Colonic mucosa (tissue), 4 donors: ENCODE measurements at regions of chr20 and their contacts with region 1.

Region 1: GRCh38 chr20:2851086-2851485 is 10.5 kb downstream of the VPS16 start:
- DNase-seq: no peak
- H3K4me3 ChIP-seq: no peak overlapping the region
- H3K27ac ChIP-seq: no peak overlapping the region
- H3K4me1 ChIP-seq: no peaks in the 10 kb centered on the region
- H3K27me3 ChIP-seq: no peaks in the 10 kb centered on the region
- CTCF ChIP-seq: no peak

Region 2: GRCh38 chr20:2643708-2644107 is 207.4 kb before region 1 on chr20:
- intact Hi-C with region 1: no loop called
- DNase-seq: no peak
- H3K4me3 ChIP-seq: no peak overlapping the region
- H3K27ac ChIP-seq: no peak overlapping the region
- H3K4me1 ChIP-seq: no peaks in the 10 kb centered on the region
- H3K27me3 ChIP-seq: no peaks in the 10 kb centered on the region
- CTCF ChIP-seq: no peak

Region 3: DNA sequence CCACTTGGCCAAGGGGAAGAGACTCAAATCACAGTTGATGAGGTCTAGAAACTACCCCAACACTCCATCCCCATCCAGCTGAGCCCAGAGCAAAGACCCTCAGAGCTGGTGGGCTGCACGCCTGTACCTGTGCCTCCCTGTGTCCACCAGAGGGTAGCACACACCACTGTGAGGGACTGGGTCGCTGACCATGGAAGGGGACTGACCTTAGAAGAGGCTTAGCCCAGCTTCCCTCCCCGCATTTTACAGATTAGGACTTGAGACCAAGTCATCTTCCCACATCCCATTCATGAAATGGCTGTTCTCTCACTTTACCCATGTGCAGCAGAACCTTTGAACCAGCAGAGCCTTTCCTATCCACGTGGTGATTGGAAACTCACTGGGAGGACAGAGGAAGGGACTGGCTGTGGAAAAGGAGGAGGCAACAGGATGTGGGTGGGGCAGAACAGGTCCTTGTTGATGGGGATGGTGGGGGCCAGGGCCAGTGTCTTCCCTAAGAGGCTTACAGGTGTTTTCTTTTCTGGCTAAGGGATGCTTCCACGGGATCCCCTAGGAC is 95.0 kb before region 1 on chr20:
- intact Hi-C with region 1: loop called (anchors 5 kb)
- DNase-seq: no peak
- H3K4me3 ChIP-seq: no peak overlapping the region
- H3K27ac ChIP-seq: no peak overlapping the region
- H3K4me1 ChIP-seq: peaks cover 7% of the 10 kb centered on the region
- H3K27me3 ChIP-seq: peaks cover 11% of the 10 kb centered on the region
- CTCF ChIP-seq: no peak